CD4-positive, alpha-beta memory T cell (primary cell): ENCODE measurements at regions of chr3 and their contacts with region 1.

Region 1: DNA sequence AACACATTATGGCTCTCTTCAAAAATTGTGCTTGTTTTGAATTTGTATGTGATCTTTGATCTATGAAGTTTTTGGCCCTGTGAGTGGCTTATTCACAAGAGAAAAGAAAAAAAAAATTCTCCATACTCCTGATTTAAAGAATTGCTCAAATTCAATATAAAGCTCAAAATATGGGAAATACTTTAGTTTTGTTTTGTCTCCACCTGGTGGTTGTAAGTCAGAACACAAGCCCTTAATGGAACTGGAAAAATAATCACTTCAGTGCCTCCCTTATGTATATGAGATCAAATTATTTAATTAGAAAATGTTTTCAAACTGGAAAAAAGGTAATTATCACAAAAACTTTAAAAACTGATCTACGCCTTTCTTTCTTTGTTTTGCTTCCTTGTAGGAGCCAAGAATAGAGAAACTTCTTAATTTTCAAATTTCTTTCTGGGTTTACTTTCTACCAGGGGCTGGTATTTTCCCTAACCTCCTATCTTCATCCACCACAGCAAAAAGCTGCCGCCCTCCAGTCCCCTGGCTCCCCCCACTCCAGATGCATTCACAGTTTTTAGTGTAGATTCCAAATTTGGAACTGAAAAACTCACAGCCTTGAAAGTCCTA is 50.6 kb downstream of the SERP1 start:
- DNase-seq: peak in 4 of 5 donors; percentile 36 to 46 (median 44)
- H3K4me3 ChIP-seq: no peak overlapping the region
- H3K4me3 Mint-ChIP-seq: no peak overlapping the region
- H3K27ac ChIP-seq: no peak overlapping the region
- H3K27ac Mint-ChIP-seq: no peak overlapping the region
- H3K4me1 ChIP-seq: no peaks in the 10 kb centered on the region
- H3K4me1 Mint-ChIP-seq: no peaks in the 10 kb centered on the region
- H3K27me3 ChIP-seq: no peaks in the 10 kb centered on the region
- H3K27me3 Mint-ChIP-seq: peaks cover 0 to 1% of the 10 kb centered on the region in 2 donors

Region 2: GRCh38 chr3:150227839-150228238 is 267.8 kb before region 1 on chr3:
- CTCF ChIA-PET with region 1: interaction called, 3 read pairs
- POLR2A ChIA-PET with region 1: no interaction called
- intact Hi-C with region 1: loop called (anchors 1 kb)
- DNase-seq: peak in 1 of 5 donors; percentile 2
- H3K4me3 ChIP-seq: no peak overlapping the region
- H3K4me3 Mint-ChIP-seq: no peak overlapping the region
- H3K27ac ChIP-seq: no peak overlapping the region
- H3K27ac Mint-ChIP-seq: no peak overlapping the region
- H3K4me1 ChIP-seq: no peaks in the 10 kb centered on the region
- H3K4me1 Mint-ChIP-seq: no peaks in the 10 kb centered on the region
- H3K27me3 ChIP-seq: no peaks in the 10 kb centered on the region
- H3K27me3 Mint-ChIP-seq: peaks cover 22 to 23% of the 10 kb centered on the region in 2 donors

Region 3: DNA sequence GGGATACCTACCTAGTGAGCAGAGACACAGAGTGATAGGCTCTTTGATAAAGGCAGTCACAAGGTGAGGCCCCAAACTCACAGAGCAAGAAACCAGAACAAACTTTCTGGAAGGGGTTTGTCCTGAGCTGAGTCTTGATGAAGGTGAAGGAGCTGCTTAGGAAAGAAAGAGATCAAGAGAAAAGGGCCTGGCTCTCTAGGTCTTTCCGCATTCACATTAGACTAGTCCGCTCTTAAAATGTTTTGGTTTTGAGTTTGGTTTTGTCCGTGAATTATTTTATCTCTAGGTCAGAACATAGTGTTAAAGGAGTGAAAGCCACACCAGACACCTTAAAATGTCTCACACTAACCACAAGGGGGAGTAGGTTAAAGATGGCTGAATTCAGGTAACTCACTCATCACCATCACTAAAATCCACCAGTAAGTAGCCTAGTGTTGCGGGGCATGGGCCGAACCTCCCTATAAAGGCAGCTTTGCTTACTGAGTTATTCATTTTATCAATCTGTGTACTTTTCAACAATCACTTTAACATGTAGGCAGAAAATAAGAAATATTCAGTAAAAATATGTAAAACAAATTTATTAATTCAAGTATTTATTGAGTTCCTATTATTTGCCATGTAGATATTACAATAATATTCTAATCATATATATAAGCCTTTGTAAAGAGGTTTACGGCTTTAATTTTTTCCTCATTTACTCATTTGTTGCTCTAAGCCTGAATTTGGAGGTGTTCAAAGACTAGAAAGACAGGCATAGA is 209.1 kb before region 1 on chr3:
- CTCF ChIA-PET with region 1: interaction called, 48 read pairs
- POLR2A ChIA-PET with region 1: no interaction called
- intact Hi-C with region 1: loop called (anchors 1 kb)
- DNase-seq: peak; percentile 45 to 50 (median 48)
- H3K4me3 ChIP-seq: no peak overlapping the region
- H3K4me3 Mint-ChIP-seq: no peak overlapping the region
- H3K27ac ChIP-seq: no peak overlapping the region
- H3K27ac Mint-ChIP-seq: no peak overlapping the region
- H3K4me1 ChIP-seq: no peaks in the 10 kb centered on the region
- H3K4me1 Mint-ChIP-seq: peaks cover 0 to 1% (median 0%) of the 10 kb centered on the region in 4 donors
- H3K27me3 ChIP-seq: peaks cover 5% of the 10 kb centered on the region
- H3K27me3 Mint-ChIP-seq: peaks cover 8 to 20% of the 10 kb centered on the region in 2 donors

Region 4: GRCh38 chr3:150384296-150385212 is 111.1 kb before region 1 on chr3:
- CTCF ChIA-PET with region 1: interaction called, 4 read pairs
- POLR2A ChIA-PET with region 1: no interaction called
- intact Hi-C with region 1: loop called (anchors 1 kb)
- DNase-seq: peak; percentile 50 to 67 (median 58)
- H3K4me3 ChIP-seq: peak overlapping the region; percentile 30 to 40
- H3K4me3 Mint-ChIP-seq: peak overlapping the region; percentile 54 to 89 (median 77)
- H3K27ac ChIP-seq: no peak overlapping the region
- H3K27ac Mint-ChIP-seq: peak overlapping the region; percentile 60 to 87 (median 68)
- H3K4me1 ChIP-seq: peaks cover 17% of the 10 kb centered on the region
- H3K4me1 Mint-ChIP-seq: peaks cover 19 to 23% (median 20%) of the 10 kb centered on the region in 4 donors
- H3K27me3 ChIP-seq: no peaks in the 10 kb centered on the region
- H3K27me3 Mint-ChIP-seq: no peaks in the 10 kb centered on the region

Region 5: GRCh38 chr3:150469031-150469942 is 26.4 kb before region 1 on chr3:
- CTCF ChIA-PET with region 1: interaction called, 16 read pairs
- POLR2A ChIA-PET with region 1: no interaction called
- intact Hi-C with region 1: no loop called
- DNase-seq: no peak
- H3K4me3 ChIP-seq: no peak overlapping the region
- H3K4me3 Mint-ChIP-seq: no peak overlapping the region
- H3K27ac ChIP-seq: no peak overlapping the region
- H3K27ac Mint-ChIP-seq: peak overlapping the region in 1 of 7 donors; percentile 38
- H3K4me1 ChIP-seq: no peaks in the 10 kb centered on the region
- H3K4me1 Mint-ChIP-seq: no peaks in the 10 kb centered on the region
- H3K27me3 ChIP-seq: no peaks in the 10 kb centered on the region
- H3K27me3 Mint-ChIP-seq: no peaks in the 10 kb centered on the region

Region 6: GRCh38 chr3:150511122-150511821 is 15.6 kb after region 1 on chr3:
- CTCF ChIA-PET with region 1: no interaction called
- POLR2A ChIA-PET with region 1: no interaction called
- intact Hi-C with region 1: no loop called
- DNase-seq: no peak
- H3K4me3 ChIP-seq: no peak overlapping the region
- H3K4me3 Mint-ChIP-seq: no peak overlapping the region
- H3K27ac ChIP-seq: no peak overlapping the region
- H3K27ac Mint-ChIP-seq: no peak overlapping the region
- H3K4me1 ChIP-seq: no peaks in the 10 kb centered on the region
- H3K4me1 Mint-ChIP-seq: no peaks in the 10 kb centered on the region
- H3K27me3 ChIP-seq: no peaks in the 10 kb centered on the region
- H3K27me3 Mint-ChIP-seq: peaks cover 18 to 21% of the 10 kb centered on the region in 2 donors

Region 7: GRCh38 chr3:150588027-150588830 is 92.6 kb after region 1 on chr3:
- CTCF ChIA-PET with region 1: no interaction called
- POLR2A ChIA-PET with region 1: no interaction called
- intact Hi-C with region 1: no loop called
- DNase-seq: no peak
- H3K4me3 ChIP-seq: no peak overlapping the region
- H3K4me3 Mint-ChIP-seq: no peak overlapping the region
- H3K27ac ChIP-seq: no peak overlapping the region
- H3K27ac Mint-ChIP-seq: peak overlapping the region in 5 of 7 donors; percentile 5 to 77 (median 32)
- H3K4me1 ChIP-seq: no peaks in the 10 kb centered on the region
- H3K4me1 Mint-ChIP-seq: peaks cover 6 to 15% (median 7%) of the 10 kb centered on the region in 4 donors
- H3K27me3 ChIP-seq: no peaks in the 10 kb centered on the region
- H3K27me3 Mint-ChIP-seq: peaks cover 0 to 1% of the 10 kb centered on the region in 2 donors

Region 8: DNA sequence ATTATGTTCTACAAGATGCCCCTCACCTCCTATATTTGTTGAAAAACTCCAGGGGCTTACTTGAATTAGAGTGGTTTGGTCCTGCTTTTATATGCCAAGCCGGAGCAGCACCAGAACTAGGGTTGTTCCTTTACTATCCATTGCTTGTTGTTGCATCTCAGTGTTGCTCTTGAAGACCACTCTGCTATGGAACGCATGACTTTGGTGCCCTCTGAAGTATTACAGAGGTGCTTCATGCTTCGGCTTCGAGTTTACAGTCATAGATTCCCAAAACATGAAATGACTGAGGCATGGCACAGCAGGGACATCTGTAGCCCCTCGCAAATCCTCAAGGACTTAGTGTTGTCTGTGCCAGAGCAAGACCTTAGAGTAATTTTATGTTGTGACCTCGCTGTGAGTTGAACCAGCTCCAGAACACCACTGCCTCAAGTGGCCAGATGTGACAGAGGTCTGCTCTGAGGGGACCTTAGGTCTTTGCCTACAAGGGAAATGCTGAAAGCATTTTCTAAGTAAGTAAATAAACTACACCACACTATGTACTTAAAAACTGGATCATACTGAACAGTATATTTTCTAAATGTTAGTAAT is 334.5 kb after region 1 on chr3:
- CTCF ChIA-PET with region 1: no interaction called
- POLR2A ChIA-PET with region 1: no interaction called
- intact Hi-C with region 1: no loop called
- DNase-seq: peak in 1 of 5 donors; percentile 7
- H3K4me3 ChIP-seq: no peak overlapping the region
- H3K4me3 Mint-ChIP-seq: no peak overlapping the region
- H3K27ac ChIP-seq: no peak overlapping the region
- H3K27ac Mint-ChIP-seq: no peak overlapping the region
- H3K4me1 ChIP-seq: no peaks in the 10 kb centered on the region
- H3K4me1 Mint-ChIP-seq: peaks cover 0 to 1% (median 0%) of the 10 kb centered on the region in 4 donors
- H3K27me3 ChIP-seq: no peaks in the 10 kb centered on the region
- H3K27me3 Mint-ChIP-seq: peaks cover 3 to 12% of the 10 kb centered on the region in 2 donors